Activated T-helper 2 cell treated with anti-CD3 and anti-CD28 coated beads, Interferon-gamma antibody, Interleukin-2, Interleukin-4, amounts not matched to agents 10 μg/mL and 5 μg/mL and 100 μg/mL, durations not matched to agents 14 hours and 24 hours and 36 hours (primary cell): ENCODE measurements at regions of chr1 and their contacts with region 1.

Region 1: DNA sequence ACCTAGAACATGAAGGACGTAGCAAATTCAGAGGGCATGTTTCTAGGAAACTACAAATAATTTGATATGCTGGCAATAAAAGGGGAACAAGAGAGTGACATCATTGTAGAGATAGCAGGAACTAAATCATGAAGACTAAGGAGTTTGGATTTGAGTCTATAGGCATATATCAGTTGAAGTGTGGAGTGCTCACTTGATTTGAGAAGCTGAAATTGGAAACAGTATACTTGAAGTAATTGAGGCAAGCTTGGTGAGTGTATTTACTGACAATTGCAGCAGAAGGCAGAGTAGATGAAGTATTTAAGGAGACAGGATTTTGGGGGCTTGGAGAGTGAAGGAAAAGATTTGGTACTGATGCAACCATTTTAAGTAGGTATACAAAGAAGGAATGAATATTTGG is 6.4 kb upstream of the TMCO2 start:
- DNase-seq: no peak
- H3K4me3 Mint-ChIP-seq: peak overlapping the region; percentile 59
- H3K27ac Mint-ChIP-seq: peak overlapping the region; percentile 83
- H3K4me1 Mint-ChIP-seq: peaks cover 59% of the 10 kb centered on the region
- H3K27me3 Mint-ChIP-seq: no peaks in the 10 kb centered on the region

Region 2: DNA sequence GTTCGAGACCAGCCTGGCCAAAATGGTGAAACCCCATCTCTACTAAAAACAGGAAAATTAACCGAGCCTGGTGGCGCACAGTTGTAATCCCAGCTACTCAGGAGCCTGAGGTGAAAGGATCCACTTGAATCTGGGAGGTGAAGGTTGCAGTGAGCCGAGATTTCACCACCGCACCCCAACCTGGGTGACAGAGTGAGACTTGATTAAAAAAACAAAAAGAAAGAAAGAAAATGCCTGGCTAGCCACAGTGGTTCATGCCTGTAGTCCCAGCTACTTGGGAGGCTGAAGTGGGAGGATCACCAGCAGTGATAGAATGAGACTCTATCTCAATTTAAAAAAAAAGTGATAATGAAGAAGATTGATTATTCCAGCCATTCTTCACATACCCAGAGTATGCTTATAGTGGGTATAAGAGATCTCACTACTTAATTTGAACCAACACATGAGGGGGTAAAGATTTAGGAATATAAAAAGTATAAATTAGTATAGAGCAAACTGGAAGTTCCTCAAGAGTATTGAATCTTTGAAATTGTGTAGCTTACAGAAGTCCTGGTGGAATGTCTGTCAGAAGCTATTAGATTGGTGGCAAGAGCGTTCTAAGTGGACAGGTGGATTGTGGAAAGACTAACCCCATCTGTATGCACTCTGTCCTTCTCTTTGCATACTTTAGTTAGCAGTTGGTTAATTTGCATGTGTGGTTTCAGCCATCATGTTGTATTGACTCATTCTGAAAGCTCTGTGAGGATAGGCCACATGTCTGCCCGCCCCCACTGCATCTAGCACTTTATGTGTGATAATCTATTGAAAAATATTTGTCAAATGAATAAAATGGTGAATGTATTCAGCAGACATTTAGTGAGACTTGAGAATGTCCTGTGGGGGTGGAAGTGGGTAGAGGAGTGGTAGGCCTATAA is 55.2 kb before region 1 on chr1:
- intact Hi-C with region 1: loop called (anchors 2 kb)
- DNase-seq: peak; percentile 51
- H3K4me3 Mint-ChIP-seq: peak overlapping the region; percentile 9
- H3K27ac Mint-ChIP-seq: peak overlapping the region; percentile 75
- H3K4me1 Mint-ChIP-seq: peaks cover 63% of the 10 kb centered on the region
- H3K27me3 Mint-ChIP-seq: no peaks in the 10 kb centered on the region